AG04449 (cell line): ENCODE measurements at regions of chr1 and their contacts with region 1.

Region 1: DNA sequence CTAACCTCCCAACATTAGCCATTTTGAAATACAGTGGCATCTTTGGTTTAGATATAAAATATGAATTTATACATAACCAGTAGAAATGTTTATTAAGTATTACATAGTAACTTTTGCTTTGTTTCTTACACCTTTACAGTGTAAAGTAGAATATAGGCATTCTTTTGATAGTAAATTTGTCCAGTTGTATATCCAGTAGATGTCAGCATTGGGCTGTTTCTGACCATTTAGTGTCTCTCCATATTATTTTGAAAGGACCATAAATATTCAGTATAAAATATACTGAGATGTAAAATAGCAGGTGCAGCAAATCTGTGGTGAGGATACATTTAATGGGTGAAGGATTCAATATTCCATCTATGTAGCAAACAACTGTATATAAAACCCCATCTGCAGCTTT is 115.8 kb upstream of the ZRANB2 start:
- DNase-seq: no peak
- H3K4me3 ChIP-seq: no peak overlapping the region
- CTCF ChIP-seq: no peak

Region 2: DNA sequence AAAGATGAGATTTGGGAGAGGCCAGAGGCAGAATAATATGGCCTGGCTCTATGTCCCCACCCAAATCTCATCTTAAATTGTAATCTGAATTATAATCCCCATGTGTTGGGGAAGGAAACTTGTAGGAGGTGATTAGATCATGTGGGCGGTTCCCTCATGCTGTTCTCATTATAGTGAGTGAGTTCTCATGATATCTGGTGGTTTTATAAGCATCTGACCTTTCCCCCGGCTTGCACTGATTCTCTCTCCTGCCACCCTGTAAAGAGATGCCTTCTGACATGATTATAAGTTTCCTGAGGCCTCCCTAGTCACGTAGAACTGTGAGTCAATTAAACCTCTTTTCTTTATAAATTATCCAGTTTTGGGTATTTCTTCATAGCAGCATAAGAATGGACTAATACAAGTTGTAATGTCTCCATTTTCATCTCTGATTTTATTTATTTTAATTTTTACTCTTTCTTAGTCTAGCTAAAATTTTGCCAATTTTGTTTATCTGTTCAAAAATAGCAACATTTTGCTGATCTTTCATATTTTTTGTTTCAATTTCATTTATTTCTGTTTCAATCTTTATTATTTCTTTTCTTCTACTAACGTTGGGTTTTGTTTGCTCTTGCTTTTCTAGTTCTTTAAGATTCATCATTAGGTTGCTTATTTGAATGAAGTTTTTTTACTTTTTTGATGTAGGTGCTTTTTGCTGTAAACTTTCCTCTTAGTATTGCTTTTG is 48.9 kb before region 1 on chr1:
- CTCF ChIA-PET with region 1: no interaction called
- POLR2A ChIA-PET with region 1: no interaction called
- DNase-seq: no peak
- H3K4me3 ChIP-seq: no peak overlapping the region
- CTCF ChIP-seq: no peak

Region 3: GRCh38 chr1:71228742-71229365 is 32.2 kb after region 1 on chr1:
- CTCF ChIA-PET with region 1: no interaction called
- POLR2A ChIA-PET with region 1: no interaction called
- DNase-seq: no peak
- H3K4me3 ChIP-seq: no peak overlapping the region
- CTCF ChIP-seq: no peak

Region 4: DNA sequence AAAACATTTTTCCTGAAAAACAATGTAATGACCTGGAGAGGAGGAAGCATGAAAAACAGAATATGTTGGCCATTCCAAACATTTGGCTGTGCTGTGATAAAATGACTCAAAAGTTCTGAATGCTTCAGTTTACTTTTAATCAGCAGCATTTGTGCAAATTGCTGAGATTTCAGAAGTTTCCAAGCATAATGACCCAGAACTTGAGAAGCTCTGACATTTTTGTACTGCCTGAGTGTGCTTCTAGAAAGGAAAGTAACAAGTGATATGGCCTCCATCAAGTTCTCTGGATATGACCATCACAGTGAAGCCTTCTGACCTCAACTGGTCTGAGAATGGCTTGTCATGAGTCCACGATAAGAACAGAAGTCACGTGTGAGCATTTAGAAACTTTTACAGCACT is 167.6 kb after region 1 on chr1:
- CTCF ChIA-PET with region 1: no interaction called
- POLR2A ChIA-PET with region 1: no interaction called
- DNase-seq: no peak
- H3K4me3 ChIP-seq: no peak overlapping the region
- CTCF ChIP-seq: no peak

Region 5: DNA sequence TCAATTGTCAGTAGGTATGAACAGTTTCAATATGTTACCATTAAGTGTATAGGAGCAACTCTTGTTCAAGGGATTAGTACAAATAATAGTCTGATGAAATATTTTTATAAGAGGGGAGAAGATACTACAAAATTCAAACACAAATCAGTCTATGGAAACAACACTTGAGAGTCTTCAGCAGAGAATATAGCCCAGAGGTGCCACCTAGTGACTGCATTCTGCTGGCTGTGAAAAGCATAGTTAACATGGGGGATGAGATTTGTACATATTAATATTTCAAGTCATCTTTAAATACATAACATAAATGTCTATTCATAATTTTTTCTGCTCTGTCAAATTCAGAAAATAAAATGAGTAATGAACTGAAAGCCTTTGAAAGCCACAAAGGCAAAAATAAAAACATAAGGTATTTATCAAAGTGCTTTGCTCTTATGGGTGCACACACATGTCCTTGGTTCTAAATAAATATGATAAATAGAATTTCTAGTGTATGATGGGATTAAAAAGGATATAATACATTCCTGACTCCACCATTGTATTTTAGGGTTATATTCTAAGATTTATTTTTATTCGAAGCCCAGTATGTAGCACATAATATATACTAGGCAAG is 325.1 kb after region 1 on chr1:
- CTCF ChIA-PET with region 1: interaction called, 15 read pairs
- POLR2A ChIA-PET with region 1: no interaction called
- DNase-seq: peak; percentile 3
- H3K4me3 ChIP-seq: no peak overlapping the region
- CTCF ChIP-seq: peak; percentile 66

Region 6: GRCh38 chr1:71721532-71721931 is 524.8 kb after region 1 on chr1:
- CTCF ChIA-PET with region 1: no interaction called
- POLR2A ChIA-PET with region 1: no interaction called
- DNase-seq: no peak
- H3K4me3 ChIP-seq: no peak overlapping the region
- CTCF ChIP-seq: no peak